Mammary epithelial cell (primary cell): ENCODE measurements at regions of chr4 and their contacts with region 1.

Region 1: GRCh38 chr4:27066601-27067000 is 206.0 kb downstream of the STIM2 start:
- DNase-seq: no peak
- H3K4me3 ChIP-seq: no peak overlapping the region
- H3K27ac ChIP-seq: no peak overlapping the region
- H3K4me1 ChIP-seq: no peaks in the 10 kb centered on the region
- H3K27me3 ChIP-seq: no peaks in the 10 kb centered on the region
- CTCF ChIP-seq: no peak

Region 2: GRCh38 chr4:26619784-26620183 is 446.8 kb before region 1 on chr4:
- CTCF ChIA-PET with region 1: no interaction called
- dilution Hi-C with region 1: no loop called
- in situ Hi-C with region 1: no loop called
- intact Hi-C with region 1: no loop called
- DNase-seq: peak; percentile 32
- H3K4me3 ChIP-seq: no peak overlapping the region
- H3K27ac ChIP-seq: no peak overlapping the region
- H3K4me1 ChIP-seq: no peaks in the 10 kb centered on the region
- H3K27me3 ChIP-seq: no peaks in the 10 kb centered on the region
- CTCF ChIP-seq: no peak

Region 3: DNA sequence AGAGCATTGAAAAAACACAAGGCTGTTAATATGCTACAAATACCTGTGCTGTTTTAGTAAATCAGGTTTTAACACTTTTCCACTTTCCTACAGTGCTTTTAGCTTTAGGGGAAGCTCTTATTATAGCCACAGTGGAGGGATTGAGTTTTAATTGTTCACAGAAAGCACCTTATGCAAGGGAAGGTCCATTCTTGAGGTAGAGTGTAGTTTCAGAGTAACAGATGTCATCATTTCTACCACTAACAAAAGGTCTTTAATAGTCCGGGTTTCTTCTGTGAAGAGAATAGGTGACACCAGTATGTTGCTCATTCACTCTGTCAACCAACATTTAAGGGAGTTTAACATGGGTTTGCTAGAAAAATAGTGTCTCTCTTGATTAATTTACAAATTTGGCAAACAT is 101.6 kb before region 1 on chr4:
- CTCF ChIA-PET with region 1: no interaction called
- dilution Hi-C with region 1: loop called (anchors 5 kb)
- in situ Hi-C with region 1: no loop called
- intact Hi-C with region 1: no loop called
- DNase-seq: peak; percentile 5
- H3K4me3 ChIP-seq: no peak overlapping the region
- H3K27ac ChIP-seq: no peak overlapping the region
- H3K4me1 ChIP-seq: peaks cover 10% of the 10 kb centered on the region
- H3K27me3 ChIP-seq: no peaks in the 10 kb centered on the region
- CTCF ChIP-seq: no peak

Region 4: GRCh38 chr4:27161191-27161590 is 94.6 kb after region 1 on chr4:
- CTCF ChIA-PET with region 1: no interaction called
- dilution Hi-C with region 1: loop called (anchors 5 kb)
- in situ Hi-C with region 1: no loop called
- intact Hi-C with region 1: no loop called
- DNase-seq: no peak
- H3K4me3 ChIP-seq: no peak overlapping the region
- H3K27ac ChIP-seq: no peak overlapping the region
- H3K4me1 ChIP-seq: no peaks in the 10 kb centered on the region
- H3K27me3 ChIP-seq: no peaks in the 10 kb centered on the region
- CTCF ChIP-seq: no peak